HEK293 (cell line): ENCODE measurements at regions of chr6 and their contacts with region 1.

Region 1: DNA sequence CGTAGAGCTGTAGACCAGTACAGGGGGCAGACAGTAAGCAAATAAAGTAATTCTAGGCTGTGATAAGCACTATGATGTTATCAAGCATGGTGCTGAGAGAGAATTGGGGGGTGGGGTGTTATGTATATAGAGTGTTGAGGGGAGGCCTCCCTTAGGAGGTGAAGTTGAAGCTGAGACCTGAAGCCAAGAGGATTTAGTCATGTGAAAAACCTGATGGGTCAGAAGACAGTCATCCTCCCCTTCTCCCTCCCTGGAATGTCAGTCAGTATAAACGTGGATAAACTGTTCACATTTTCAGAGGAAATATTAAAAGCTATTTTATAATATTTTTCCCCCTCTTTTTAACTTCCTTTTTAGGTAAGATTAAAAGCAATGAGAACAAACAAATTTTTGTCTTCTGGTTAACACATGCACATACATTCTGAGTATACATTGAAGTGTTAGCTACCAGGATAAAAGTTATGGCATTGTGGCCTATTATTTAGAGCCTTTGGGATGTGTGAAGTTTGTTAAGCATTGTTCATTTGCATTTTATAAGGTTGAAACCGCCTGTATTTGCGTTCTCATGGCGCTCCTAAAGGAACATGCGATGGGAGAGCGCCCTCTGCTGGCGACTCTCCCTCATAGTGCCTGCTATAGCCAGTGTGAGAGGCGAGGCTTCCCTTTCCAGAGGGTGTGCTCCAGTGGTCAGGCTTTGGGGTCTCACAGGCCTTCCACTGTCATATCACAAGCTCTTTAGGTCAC is 35.4 kb upstream of the MAPK13 start:
- H3K4me3 ChIP-seq: no peak overlapping the region
- H3K27ac ChIP-seq: no peak overlapping the region
- H3K4me1 ChIP-seq: no peaks in the 10 kb centered on the region
- CTCF ChIP-seq: peak; percentile 84

Region 2: DNA sequence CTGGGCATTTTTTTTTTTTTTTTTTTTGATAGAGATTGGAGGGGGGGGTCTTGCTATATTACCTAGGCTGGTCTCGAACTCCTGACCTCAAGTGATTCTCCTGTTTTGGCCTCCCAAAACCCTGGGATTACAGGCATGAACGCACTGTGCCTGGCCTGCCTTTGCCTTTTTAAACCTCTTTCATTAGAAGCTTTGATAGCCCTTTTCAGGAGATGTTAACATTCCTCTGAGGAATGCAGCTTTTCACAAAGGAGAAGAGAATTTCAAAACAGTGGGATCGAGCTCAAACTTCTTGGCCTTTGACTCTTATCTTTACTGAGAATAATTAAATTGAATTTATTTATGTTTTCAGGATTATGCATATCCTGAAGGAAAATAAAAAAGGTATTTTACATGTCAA is 101.8 kb before region 1 on chr6:
- CTCF ChIA-PET with region 1: interaction called, 12 read pairs
- POLR2A ChIA-PET with region 1: no interaction called
- H3K4me3 ChIP-seq: no peak overlapping the region
- H3K27ac ChIP-seq: no peak overlapping the region
- H3K4me1 ChIP-seq: no peaks in the 10 kb centered on the region
- CTCF ChIP-seq: no peak

Region 3: DNA sequence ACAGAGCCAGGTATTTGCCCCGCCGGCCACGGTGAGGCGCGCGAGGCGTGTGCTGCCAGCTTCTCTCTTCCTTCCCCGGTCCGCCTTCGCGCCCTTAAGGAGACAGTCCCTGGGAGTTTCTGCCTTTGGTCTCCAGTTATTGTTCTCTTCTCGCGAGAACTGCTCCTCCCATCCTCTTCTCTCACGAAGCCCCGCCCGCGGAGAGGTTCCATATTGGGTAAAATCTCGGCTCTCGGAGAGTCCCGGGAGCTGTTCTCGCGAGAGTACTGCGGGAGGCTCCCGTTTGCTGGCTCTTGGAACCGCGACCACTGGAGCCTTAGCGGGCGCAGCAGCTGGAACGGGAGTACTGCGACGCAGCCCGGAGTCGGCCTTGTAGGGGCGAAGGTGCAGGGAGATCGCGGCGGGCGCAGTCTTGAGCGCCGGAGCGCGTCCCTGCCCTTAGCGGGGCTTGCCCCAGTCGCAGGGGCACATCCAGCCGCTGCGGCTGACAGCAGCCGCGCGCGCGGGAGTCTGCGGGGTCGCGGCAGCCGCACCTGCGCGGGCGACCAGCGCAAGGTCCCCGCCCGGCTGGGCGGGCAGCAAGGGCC is 67.3 kb before region 1 on chr6 and contains the start of gene MAPK14:
- CTCF ChIA-PET with region 1: interaction called, 232 read pairs
- POLR2A ChIA-PET with region 1: interaction called, 32 read pairs
- H3K4me3 ChIP-seq: peak within 1 kb of the TSS; percentile 78
- H3K27ac ChIP-seq: peak within 1 kb of the TSS; percentile 90
- H3K4me1 ChIP-seq: peaks cover 3% of the 10 kb centered on the region; the same call in 1 of the 2 replicates
- CTCF ChIP-seq: peak; percentile 96; the same call in 1 of the 2 replicates

Region 4: GRCh38 chr6:36042618-36043260 is 52.2 kb before region 1 on chr6:
- CTCF ChIA-PET with region 1: interaction called, 11 read pairs
- POLR2A ChIA-PET with region 1: no interaction called
- H3K4me3 ChIP-seq: no peak overlapping the region
- H3K27ac ChIP-seq: no peak overlapping the region
- H3K4me1 ChIP-seq: peaks cover 24% of the 10 kb centered on the region
- CTCF ChIP-seq: no peak

Region 5: GRCh38 chr6:36075656-36076055 is 19.3 kb before region 1 on chr6:
- CTCF ChIA-PET with region 1: interaction called, 85 read pairs
- POLR2A ChIA-PET with region 1: no interaction called
- H3K4me3 ChIP-seq: no peak overlapping the region
- H3K27ac ChIP-seq: no peak overlapping the region
- H3K4me1 ChIP-seq: peaks cover 5% of the 10 kb centered on the region; the same call in 1 of the 2 replicates
- CTCF ChIP-seq: no peak

Region 6: DNA sequence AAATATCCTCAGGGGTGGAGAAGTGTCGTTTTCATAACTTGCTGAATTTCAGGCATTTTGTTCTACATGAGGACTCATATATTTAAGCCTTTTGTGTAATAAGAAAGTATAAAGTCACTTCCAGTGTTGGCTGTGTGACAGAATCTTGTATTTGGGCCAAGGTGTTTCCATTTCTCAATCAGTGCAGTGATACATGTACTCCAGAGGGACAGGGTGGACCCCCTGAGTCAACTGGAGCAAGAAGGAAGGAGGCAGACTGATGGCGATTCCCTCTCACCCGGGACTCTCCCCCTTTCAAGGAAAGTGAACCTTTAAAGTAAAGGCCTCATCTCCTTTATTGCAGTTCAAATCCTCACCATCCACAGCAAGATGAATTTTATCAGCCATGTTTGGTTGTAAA is 15.1 kb after region 1 on chr6:
- CTCF ChIA-PET with region 1: interaction called, 77 read pairs
- POLR2A ChIA-PET with region 1: no interaction called
- H3K4me3 ChIP-seq: no peak overlapping the region
- H3K27ac ChIP-seq: no peak overlapping the region
- H3K4me1 ChIP-seq: no peaks in the 10 kb centered on the region
- CTCF ChIP-seq: no peak